Gastrocnemius medialis (tissue), 4 donors: ENCODE measurements at regions of chr6 and their contacts with region 1.

Region 1: DNA sequence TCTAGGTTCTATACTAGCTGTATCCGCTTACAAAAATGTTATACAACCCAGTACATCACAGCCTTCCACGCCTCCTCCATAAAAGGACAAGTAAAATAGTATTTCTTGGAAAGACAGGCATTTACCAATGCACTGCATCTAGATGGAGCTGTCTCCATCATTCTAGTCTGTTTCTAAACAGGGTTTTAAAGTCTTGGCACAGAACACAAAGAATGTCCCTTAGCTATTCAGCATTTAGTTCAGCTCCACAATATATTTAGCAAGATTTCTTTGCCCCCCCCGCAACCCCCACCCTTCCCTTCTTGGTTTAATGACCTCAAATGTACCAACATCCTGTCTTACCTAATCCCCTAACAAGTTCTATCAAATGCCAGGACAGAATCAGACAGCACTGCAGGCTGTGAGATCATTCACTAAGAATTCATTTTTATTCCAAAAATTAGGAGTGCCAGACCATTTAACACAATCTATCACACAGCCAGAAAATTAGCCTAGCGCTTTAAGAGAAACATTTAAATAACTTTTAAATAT is 198.6 kb downstream of the BACH2 start:
- DNase-seq: peak; percentile 60 to 87
- ATAC-seq: peak; percentile 85
- H3K4me3 ChIP-seq: no peak overlapping the region
- H3K27ac ChIP-seq: peak overlapping the region; percentile 62 to 82 (median 70)
- H3K4me1 ChIP-seq: peaks cover 38 to 46% of the 10 kb centered on the region in 2 donors
- H3K27me3 ChIP-seq: no peaks in the 10 kb centered on the region
- CTCF ChIP-seq: peak in 2 of 5 experiments; percentile 31 to 39
- POLR2A ChIP-seq: no peak

Region 2: GRCh38 chr6:89970609-89971337 is 127.3 kb before region 1 on chr6:
- in situ Hi-C with region 1: no loop called
- intact Hi-C with region 1: loop called (anchors 5 kb)
- DNase-seq: no peak
- ATAC-seq: peak; percentile 59 to 75
- H3K4me3 ChIP-seq: no peak overlapping the region
- H3K27ac ChIP-seq: peak overlapping the region in 1 of 4 donors; percentile 64
- H3K4me1 ChIP-seq: peaks cover 30 to 36% of the 10 kb centered on the region in 2 donors
- H3K27me3 ChIP-seq: no peaks in the 10 kb centered on the region
- CTCF ChIP-seq: peak; percentile 26 to 64 (median 44)
- POLR2A ChIP-seq: no peak

Region 3: GRCh38 chr6:90197854-90198496 is 99.9 kb after region 1 on chr6:
- in situ Hi-C with region 1: no loop called
- intact Hi-C with region 1: loop called (anchors 2 kb)
- DNase-seq: peak; percentile 67 to 86
- ATAC-seq: peak; percentile 68 to 89
- H3K4me3 ChIP-seq: no peak overlapping the region
- H3K27ac ChIP-seq: peak overlapping the region; percentile 62 to 80 (median 78)
- H3K4me1 ChIP-seq: peaks cover 64 to 67% of the 10 kb centered on the region in 2 donors
- H3K27me3 ChIP-seq: no peaks in the 10 kb centered on the region
- CTCF ChIP-seq: no peak
- POLR2A ChIP-seq: no peak

Region 4: DNA sequence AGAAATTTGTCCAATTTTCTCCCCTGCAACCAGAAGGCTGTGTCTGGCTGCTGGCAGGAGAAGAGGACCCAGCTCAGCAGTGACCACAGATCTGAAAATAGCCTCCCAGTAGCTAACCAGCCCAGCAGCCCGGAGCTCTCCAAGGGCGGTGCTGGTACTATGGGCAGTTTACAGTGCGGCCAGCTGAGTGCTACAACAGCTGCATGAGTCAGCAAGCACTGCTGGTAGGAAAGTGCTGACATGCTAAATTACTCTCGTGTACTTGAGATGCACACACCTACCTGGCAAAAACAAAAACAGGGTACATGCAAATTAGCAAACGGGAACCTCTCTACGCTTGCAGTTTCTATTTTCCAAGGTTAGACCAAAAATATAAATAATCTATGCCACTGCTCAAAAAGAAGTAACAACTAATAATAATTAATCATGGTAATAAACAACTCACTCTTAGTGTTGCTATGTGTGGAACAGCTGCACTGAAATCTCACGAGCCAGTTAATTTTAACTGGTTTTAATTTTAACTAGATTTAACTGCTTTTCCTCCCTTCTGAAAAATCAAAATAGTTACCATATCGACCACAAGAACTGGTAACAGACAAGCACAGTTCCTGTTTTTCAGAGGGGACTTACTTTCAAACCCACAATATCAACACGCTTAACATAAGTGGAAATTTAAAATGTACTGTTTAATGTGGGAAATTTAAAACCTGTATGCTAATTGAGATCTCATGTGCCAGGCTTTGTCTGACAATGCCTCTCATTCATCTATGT is 187.7 kb after region 1 on chr6:
- in situ Hi-C with region 1: loop called in 3 of 4 experiments (anchors 5 to 25 kb)
- intact Hi-C with region 1: no loop called
- DNase-seq: peak; percentile 94 to 97
- ATAC-seq: peak; percentile 89 to 96
- H3K4me3 ChIP-seq: peak overlapping the region; percentile 27 to 49 (median 43)
- H3K27ac ChIP-seq: peak overlapping the region; percentile 75 to 92 (median 84)
- H3K4me1 ChIP-seq: peaks cover 60 to 66% of the 10 kb centered on the region in 2 donors
- H3K27me3 ChIP-seq: no peaks in the 10 kb centered on the region
- CTCF ChIP-seq: no peak
- POLR2A ChIP-seq: peak in 1 of 2 donors; percentile 18

Region 5: DNA sequence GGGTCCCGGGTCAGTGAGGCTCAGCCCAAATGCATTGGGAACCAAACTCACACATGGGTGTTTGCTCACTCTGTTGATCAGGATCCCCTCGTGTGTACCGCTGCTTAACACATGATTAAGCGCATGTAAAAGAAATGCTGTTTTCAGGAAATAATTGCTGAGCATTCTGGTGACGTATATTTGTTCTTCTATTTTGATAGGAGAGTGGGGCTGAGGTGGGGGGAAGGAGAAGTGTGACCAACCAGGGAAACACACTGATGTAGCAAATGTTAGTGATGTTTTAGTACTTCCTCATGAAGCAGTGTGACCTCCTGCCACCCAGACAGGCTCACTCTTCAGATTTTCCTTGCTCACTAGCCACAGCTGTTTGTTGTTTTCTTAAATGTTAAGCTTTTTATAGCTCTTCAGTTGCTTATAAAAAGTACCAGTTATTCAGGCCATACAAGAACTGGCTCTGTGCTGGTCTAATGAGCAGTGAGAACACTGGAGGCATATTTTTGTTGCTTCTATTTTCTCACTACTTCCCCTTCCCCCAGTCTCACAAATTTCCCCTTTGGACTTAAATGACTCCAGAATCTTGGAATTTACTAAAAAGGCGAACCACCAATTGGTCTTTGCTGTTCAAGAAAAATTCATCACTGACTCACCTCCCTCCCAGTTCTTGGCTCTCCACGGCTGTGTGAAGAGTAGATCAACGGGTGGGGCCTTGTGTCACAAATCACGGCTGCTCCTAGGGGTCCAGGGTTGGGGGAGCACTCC is 277.8 kb after region 1 on chr6:
- in situ Hi-C with region 1: loop called in 1 of 4 experiments (anchors 10 kb)
- intact Hi-C with region 1: no loop called
- DNase-seq: no peak
- ATAC-seq: peak; percentile 33 to 55
- H3K4me3 ChIP-seq: no peak overlapping the region
- H3K27ac ChIP-seq: peak overlapping the region in 1 of 4 donors; percentile 41
- H3K4me1 ChIP-seq: peaks cover 0 to 7% of the 10 kb centered on the region in 2 donors
- H3K27me3 ChIP-seq: no peaks in the 10 kb centered on the region
- CTCF ChIP-seq: no peak
- POLR2A ChIP-seq: no peak

Region 6: GRCh38 chr6:90478789-90479602 is 380.9 kb after region 1 on chr6:
- in situ Hi-C with region 1: loop called in 2 of 4 experiments (anchors 10 kb)
- intact Hi-C with region 1: loop called (anchors 5 kb)
- DNase-seq: peak; percentile 92 to 95
- ATAC-seq: peak; percentile 99 to 100
- H3K4me3 ChIP-seq: no peak overlapping the region
- H3K27ac ChIP-seq: peak overlapping the region; percentile 31 to 68 (median 58)
- H3K4me1 ChIP-seq: peaks cover 0 to 5% of the 10 kb centered on the region in 2 donors
- H3K27me3 ChIP-seq: no peaks in the 10 kb centered on the region
- CTCF ChIP-seq: peak; percentile 86 to 94 (median 93)
- POLR2A ChIP-seq: no peak